ENCODE measurements at regions of chr1 and their contacts with region 1.

Region 1: DNA sequence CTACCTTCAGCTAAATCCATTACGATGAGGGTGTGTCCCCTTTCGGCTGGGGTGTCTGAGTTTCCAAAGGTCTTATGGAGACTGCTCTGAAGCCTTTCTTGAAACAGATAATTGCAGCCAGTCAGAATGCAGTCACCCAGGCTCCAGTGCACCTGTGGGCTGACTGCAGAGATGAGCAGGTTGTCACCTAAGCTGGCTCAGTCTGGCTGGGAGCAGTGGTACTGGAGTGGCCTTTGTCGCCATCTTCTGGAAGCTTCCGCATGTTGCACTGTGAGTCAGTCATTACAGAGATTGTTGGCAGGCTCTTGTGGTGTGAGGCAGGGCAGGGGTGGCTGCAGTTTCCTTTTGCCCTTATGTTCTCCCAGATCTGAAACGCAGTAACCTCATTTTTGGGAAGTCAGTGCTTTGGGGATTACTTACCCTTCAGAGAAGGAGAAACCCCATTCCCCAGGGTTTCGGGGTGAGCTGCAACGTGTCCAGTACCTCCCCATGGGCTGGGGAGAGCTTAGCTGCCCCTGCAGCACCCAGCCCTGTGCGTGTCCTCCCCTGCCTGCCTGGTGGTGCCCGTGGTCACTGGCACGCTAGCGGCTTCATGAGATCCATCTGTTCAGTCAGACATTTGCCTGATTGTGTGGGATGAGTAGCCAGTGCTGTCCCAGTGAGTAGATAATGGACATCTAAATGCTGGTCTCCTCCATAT is 48.0 kb downstream of the SMYD2 start:
- DNase-seq: peak; percentile 53 to 82 (median 75)
- ATAC-seq: peak; percentile 93
- H3K4me3 ChIP-seq: no peak overlapping the region
- H3K4me3 Mint-ChIP-seq: no peak overlapping the region
- H3K27ac ChIP-seq: no peak overlapping the region
- H3K27ac Mint-ChIP-seq: peak overlapping the region in 5 of 9 donors; percentile 14 to 80 (median 41)
- H3K4me1 ChIP-seq: no peaks in the 10 kb centered on the region
- H3K4me1 Mint-ChIP-seq: peaks cover 0 to 11% (median 0%) of the 10 kb centered on the region in 7 donors
- H3K27me3 ChIP-seq: no peaks in the 10 kb centered on the region
- H3K27me3 Mint-ChIP-seq: no peaks in the 10 kb centered on the region

Region 2: DNA sequence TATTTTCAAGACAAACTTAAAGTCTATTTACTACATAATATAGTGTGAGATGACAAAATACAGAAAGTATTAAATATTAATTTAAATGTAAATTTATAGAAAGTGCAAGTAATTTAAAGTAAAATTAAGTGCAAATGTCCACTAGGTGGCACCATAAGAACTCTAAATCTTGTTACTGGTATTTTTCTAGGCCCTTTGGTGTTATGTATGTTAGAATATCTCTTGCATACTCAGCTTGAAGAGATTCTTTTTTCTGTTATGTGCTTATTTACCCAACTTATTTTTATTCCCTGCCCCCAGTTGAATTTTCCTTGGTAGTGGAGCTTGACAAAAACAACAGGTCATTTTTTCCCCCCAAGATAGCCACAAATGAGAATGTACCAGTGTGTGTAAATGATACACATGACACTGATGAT is 1206.4 kb before region 1 on chr1:
- CTCF ChIA-PET with region 1: no interaction called
- POLR2A ChIA-PET with region 1: no interaction called
- intact Hi-C with region 1: loop called (anchors 2 to 5 kb)
- DNase-seq: peak in 5 of 9 donors; percentile 8 to 21 (median 16)
- ATAC-seq: no peak
- H3K4me3 ChIP-seq: no peak overlapping the region
- H3K4me3 Mint-ChIP-seq: no peak overlapping the region
- H3K27ac ChIP-seq: no peak overlapping the region
- H3K27ac Mint-ChIP-seq: no peak overlapping the region
- H3K4me1 ChIP-seq: no peaks in the 10 kb centered on the region
- H3K4me1 Mint-ChIP-seq: peaks cover 0 to 8% (median 2%) of the 10 kb centered on the region in 7 donors
- H3K27me3 ChIP-seq: no peaks in the 10 kb centered on the region
- H3K27me3 Mint-ChIP-seq: no peaks in the 10 kb centered on the region

Region 3: DNA sequence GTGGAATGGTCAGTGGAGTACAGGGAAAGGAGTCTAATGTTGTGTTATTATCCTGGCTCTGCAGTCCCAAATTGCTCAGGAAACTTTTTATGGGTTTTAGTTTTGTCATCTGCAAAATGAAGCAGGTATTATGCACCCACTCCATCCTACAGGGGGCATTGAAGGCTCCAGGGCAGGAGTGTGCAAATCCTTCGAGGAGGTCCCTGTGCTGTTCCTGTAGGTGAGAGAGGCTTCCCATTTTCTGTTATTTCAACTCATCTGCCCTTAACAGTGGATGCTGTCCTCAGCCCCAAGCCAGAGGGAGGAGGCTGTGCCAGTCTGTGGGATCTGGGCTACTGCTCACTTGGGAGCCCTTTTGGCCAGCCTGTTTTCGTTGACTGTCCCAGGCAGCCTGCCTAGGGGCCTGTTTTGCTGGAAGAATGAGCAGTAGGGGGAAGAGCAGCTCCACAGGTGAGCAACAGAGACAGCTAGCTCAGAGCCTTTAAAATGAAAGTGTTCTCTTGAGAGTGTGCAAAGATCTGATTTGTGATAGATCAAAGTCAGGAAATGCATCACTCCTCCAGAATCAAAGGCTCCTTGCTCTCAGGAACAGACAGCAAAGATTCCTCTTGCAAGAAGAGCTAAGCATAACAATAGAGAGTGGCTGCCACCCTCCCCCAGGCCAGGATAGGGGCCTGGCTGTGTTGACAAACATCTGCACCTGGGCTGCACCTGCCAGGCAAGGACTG is 658.8 kb before region 1 on chr1:
- CTCF ChIA-PET with region 1: no interaction called
- POLR2A ChIA-PET with region 1: no interaction called
- intact Hi-C with region 1: loop called in 1 of 2 experiments (anchors 1 kb)
- DNase-seq: peak in 8 of 9 donors; percentile 9 to 89 (median 80)
- ATAC-seq: peak; percentile 93
- H3K4me3 ChIP-seq: no peak overlapping the region
- H3K4me3 Mint-ChIP-seq: peak overlapping the region in 8 of 10 donors; percentile 7 to 67 (median 52)
- H3K27ac ChIP-seq: peak overlapping the region; percentile 48
- H3K27ac Mint-ChIP-seq: peak overlapping the region in 8 of 9 donors; percentile 41 to 97 (median 90)
- H3K4me1 ChIP-seq: peaks cover 0 to 15% of the 10 kb centered on the region in 2 donors
- H3K4me1 Mint-ChIP-seq: peaks cover 7 to 39% (median 29%) of the 10 kb centered on the region in 7 donors
- H3K27me3 ChIP-seq: no peaks in the 10 kb centered on the region
- H3K27me3 Mint-ChIP-seq: no peaks in the 10 kb centered on the region

Region 4: GRCh38 chr1:214146523-214146922 is 182.4 kb before region 1 on chr1:
- CTCF ChIA-PET with region 1: no interaction called
- POLR2A ChIA-PET with region 1: no interaction called
- intact Hi-C with region 1: no loop called
- DNase-seq: no peak
- ATAC-seq: no peak
- H3K4me3 ChIP-seq: no peak overlapping the region
- H3K4me3 Mint-ChIP-seq: no peak overlapping the region
- H3K27ac ChIP-seq: no peak overlapping the region
- H3K27ac Mint-ChIP-seq: no peak overlapping the region
- H3K4me1 ChIP-seq: no peaks in the 10 kb centered on the region
- H3K4me1 Mint-ChIP-seq: no peaks in the 10 kb centered on the region
- H3K27me3 ChIP-seq: no peaks in the 10 kb centered on the region
- H3K27me3 Mint-ChIP-seq: peaks cover 0 to 11% (median 0%) of the 10 kb centered on the region in 5 donors

Region 5: GRCh38 chr1:214261206-214262123 is 67.5 kb before region 1 on chr1:
- CTCF ChIA-PET with region 1: interaction called, 312 read pairs
- POLR2A ChIA-PET with region 1: interaction called, 6 read pairs
- intact Hi-C with region 1: loop called (anchors 1 kb)
- DNase-seq: peak; percentile 47 to 82 (median 73)
- ATAC-seq: peak; percentile 98
- H3K4me3 ChIP-seq: no peak overlapping the region
- H3K4me3 Mint-ChIP-seq: peak overlapping the region in 1 of 10 donors; percentile 28
- H3K27ac ChIP-seq: no peak overlapping the region
- H3K27ac Mint-ChIP-seq: no peak overlapping the region
- H3K4me1 ChIP-seq: no peaks in the 10 kb centered on the region
- H3K4me1 Mint-ChIP-seq: peaks cover 0 to 15% (median 0%) of the 10 kb centered on the region in 7 donors
- H3K27me3 ChIP-seq: peaks cover 0 to 9% of the 10 kb centered on the region in 2 donors
- H3K27me3 Mint-ChIP-seq: peaks cover 55 to 75% (median 68%) of the 10 kb centered on the region in 5 donors

Region 6: GRCh38 chr1:214310010-214310409 is 18.9 kb before region 1 on chr1:
- CTCF ChIA-PET with region 1: interaction called, 10 read pairs
- POLR2A ChIA-PET with region 1: no interaction called
- intact Hi-C with region 1: no loop called
- DNase-seq: no peak
- ATAC-seq: no peak
- H3K4me3 ChIP-seq: no peak overlapping the region
- H3K4me3 Mint-ChIP-seq: peak overlapping the region in 9 of 10 donors; percentile 7 to 78 (median 57)
- H3K27ac ChIP-seq: no peak overlapping the region
- H3K27ac Mint-ChIP-seq: peak overlapping the region in 2 of 9 donors; percentile 22 to 49
- H3K4me1 ChIP-seq: peaks cover 17% of the 10 kb centered on the region in 2 donors
- H3K4me1 Mint-ChIP-seq: peaks cover 21 to 48% (median 43%) of the 10 kb centered on the region in 7 donors
- H3K27me3 ChIP-seq: no peaks in the 10 kb centered on the region
- H3K27me3 Mint-ChIP-seq: no peaks in the 10 kb centered on the region

Region 7: DNA sequence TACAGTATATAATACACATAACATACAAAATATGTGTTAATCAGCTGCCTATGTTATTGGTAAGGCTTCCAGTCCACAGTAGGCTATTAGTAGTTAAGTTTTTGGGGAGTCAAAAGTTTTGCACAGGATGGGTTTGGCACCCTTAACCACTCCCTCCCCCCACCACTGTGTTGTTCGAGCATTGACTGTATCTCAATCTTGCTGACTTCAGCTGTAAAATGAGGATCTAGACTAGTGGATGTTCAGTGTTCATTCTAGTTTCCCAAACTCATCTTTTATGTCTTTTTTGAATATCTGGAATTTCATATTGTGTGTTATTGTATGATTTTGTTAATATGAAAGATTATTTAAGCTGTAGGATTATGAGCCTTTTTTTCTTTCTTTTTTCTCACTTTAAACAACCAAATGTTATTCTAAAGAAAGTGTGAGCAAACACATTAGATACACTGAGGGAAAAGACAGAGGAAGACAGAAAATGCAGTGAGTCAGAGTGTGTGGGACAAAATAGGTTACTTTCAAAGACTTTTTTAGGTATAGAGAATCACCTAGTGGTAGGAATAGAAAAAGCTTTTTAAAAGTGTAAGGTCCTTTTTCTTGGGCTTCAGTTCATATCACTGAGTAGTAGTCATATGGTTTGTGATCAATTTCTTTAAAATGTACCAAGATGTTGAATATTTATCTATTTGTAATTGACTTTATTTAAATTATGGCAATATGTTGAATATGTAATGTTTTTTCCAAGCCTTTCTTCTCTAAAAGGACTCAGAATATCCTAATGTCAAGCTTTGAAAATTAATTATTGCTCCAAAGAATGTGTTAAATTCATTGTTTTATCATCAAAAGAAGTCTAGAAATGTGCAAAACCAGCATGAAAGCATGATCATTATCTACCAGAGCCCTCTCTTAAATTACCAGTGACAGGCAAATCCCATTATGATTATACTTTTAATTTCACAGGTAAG is 256.2 kb after region 1 on chr1:
- CTCF ChIA-PET with region 1: interaction called, 7 read pairs
- POLR2A ChIA-PET with region 1: no interaction called
- intact Hi-C with region 1: loop called (anchors 1 kb)
- DNase-seq: peak in 3 of 9 donors; percentile 9 to 12 (median 10)
- ATAC-seq: peak; percentile 45
- H3K4me3 ChIP-seq: no peak overlapping the region
- H3K4me3 Mint-ChIP-seq: no peak overlapping the region
- H3K27ac ChIP-seq: no peak overlapping the region
- H3K27ac Mint-ChIP-seq: no peak overlapping the region
- H3K4me1 ChIP-seq: no peaks in the 10 kb centered on the region
- H3K4me1 Mint-ChIP-seq: peaks cover 0 to 4% (median 0%) of the 10 kb centered on the region in 7 donors
- H3K27me3 ChIP-seq: no peaks in the 10 kb centered on the region
- H3K27me3 Mint-ChIP-seq: peaks cover 0 to 12% (median 4%) of the 10 kb centered on the region in 5 donors

Region 8: GRCh38 chr1:214637722-214638458 is 309.0 kb after region 1 on chr1:
- CTCF ChIA-PET with region 1: no interaction called
- POLR2A ChIA-PET with region 1: no interaction called
- intact Hi-C with region 1: loop called in 1 of 2 experiments (anchors 2 kb)
- DNase-seq: peak in 5 of 9 donors; percentile 9 to 48 (median 36)
- ATAC-seq: peak; percentile 46
- H3K4me3 ChIP-seq: no peak overlapping the region
- H3K4me3 Mint-ChIP-seq: peak overlapping the region in 9 of 10 donors; percentile 45 to 82 (median 62)
- H3K27ac ChIP-seq: no peak overlapping the region
- H3K27ac Mint-ChIP-seq: peak overlapping the region in 6 of 9 donors; percentile 59 to 91 (median 80)
- H3K4me1 ChIP-seq: peaks cover 0 to 45% of the 10 kb centered on the region in 2 donors
- H3K4me1 Mint-ChIP-seq: peaks cover 4 to 44% (median 10%) of the 10 kb centered on the region in 7 donors
- H3K27me3 ChIP-seq: no peaks in the 10 kb centered on the region
- H3K27me3 Mint-ChIP-seq: no peaks in the 10 kb centered on the region

Region 9: GRCh38 chr1:214685906-214686305 is 357.0 kb after region 1 on chr1:
- CTCF ChIA-PET with region 1: no interaction called
- POLR2A ChIA-PET with region 1: no interaction called
- intact Hi-C with region 1: no loop called
- DNase-seq: no peak
- ATAC-seq: no peak
- H3K4me3 ChIP-seq: no peak overlapping the region
- H3K4me3 Mint-ChIP-seq: no peak overlapping the region
- H3K27ac ChIP-seq: no peak overlapping the region
- H3K27ac Mint-ChIP-seq: no peak overlapping the region
- H3K4me1 ChIP-seq: no peaks in the 10 kb centered on the region
- H3K4me1 Mint-ChIP-seq: no peaks in the 10 kb centered on the region
- H3K27me3 ChIP-seq: no peaks in the 10 kb centered on the region
- H3K27me3 Mint-ChIP-seq: peaks cover 0 to 4% (median 0%) of the 10 kb centered on the region in 5 donors

Measured in naive thymus-derived CD4-positive, alpha-beta T cell (primary cell).